ENCODE measurements at regions of chr12 and their contacts with region 1.

Region 1: GRCh38 chr12:22100958-22101748 is 55.1 kb downstream of the CMAS start:
- DNase-seq: peak; percentile 76
- H3K4me3 Mint-ChIP-seq: no peak overlapping the region
- H3K27ac Mint-ChIP-seq: no peak overlapping the region
- H3K4me1 Mint-ChIP-seq: peaks cover 14% of the 10 kb centered on the region
- H3K27me3 Mint-ChIP-seq: no peaks in the 10 kb centered on the region

Region 2: DNA sequence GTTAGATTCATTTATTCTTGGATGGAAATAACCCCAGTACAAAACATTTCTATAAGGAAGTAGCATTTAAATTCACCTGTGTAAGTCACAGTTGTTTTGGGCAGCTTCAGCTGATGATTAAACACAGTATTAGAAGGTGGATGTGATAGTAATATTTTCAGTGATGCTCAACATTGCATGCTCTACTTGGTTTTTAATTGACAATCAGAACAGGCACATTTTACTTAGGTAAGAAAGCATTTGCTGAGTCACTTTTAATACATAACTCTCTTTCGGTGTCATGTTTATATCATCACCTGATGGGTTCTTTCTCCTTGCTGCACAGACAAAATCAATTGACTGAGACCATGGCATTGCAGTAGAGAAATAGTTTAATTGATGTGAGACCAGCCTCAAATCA is 25.6 kb after region 1 on chr12:
- CTCF ChIA-PET with region 1: interaction called, 5 read pairs
- intact Hi-C with region 1: loop called (anchors 1 kb)
- DNase-seq: no peak
- H3K4me3 Mint-ChIP-seq: no peak overlapping the region
- H3K27ac Mint-ChIP-seq: no peak overlapping the region
- H3K4me1 Mint-ChIP-seq: peaks cover 11% of the 10 kb centered on the region
- H3K27me3 Mint-ChIP-seq: no peaks in the 10 kb centered on the region

Region 3: GRCh38 chr12:22164139-22164538 is 63.0 kb after region 1 on chr12:
- CTCF ChIA-PET with region 1: no interaction called
- intact Hi-C with region 1: no loop called
- DNase-seq: peak; percentile 21
- H3K4me3 Mint-ChIP-seq: peak overlapping the region; percentile 3
- H3K27ac Mint-ChIP-seq: peak overlapping the region; percentile 1
- H3K4me1 Mint-ChIP-seq: peaks cover 40% of the 10 kb centered on the region
- H3K27me3 Mint-ChIP-seq: no peaks in the 10 kb centered on the region

Region 4: DNA sequence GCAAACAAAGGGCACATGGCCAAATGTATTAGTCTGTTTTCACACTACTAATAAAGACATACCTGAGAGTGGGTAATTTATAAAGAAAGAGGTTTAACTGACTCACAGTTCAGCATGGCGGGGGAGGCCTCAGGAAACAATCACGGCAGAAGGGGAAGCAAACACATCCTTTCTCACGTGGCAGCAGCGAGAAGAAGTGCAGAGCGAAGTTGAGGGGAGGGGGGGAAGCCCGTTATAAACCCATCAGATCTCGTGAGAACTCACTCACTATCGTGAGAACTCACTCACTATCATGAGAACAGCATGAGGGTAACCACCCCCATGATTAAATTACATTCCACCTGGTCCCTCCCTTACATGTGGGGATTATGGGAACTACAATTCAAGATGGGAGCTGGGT is 167.3 kb after region 1 on chr12:
- CTCF ChIA-PET with region 1: no interaction called
- intact Hi-C with region 1: loop called (anchors 5 kb)
- DNase-seq: peak; percentile 36
- H3K4me3 Mint-ChIP-seq: no peak overlapping the region
- H3K27ac Mint-ChIP-seq: no peak overlapping the region
- H3K4me1 Mint-ChIP-seq: peaks cover 7% of the 10 kb centered on the region
- H3K27me3 Mint-ChIP-seq: no peaks in the 10 kb centered on the region

Region 5: DNA sequence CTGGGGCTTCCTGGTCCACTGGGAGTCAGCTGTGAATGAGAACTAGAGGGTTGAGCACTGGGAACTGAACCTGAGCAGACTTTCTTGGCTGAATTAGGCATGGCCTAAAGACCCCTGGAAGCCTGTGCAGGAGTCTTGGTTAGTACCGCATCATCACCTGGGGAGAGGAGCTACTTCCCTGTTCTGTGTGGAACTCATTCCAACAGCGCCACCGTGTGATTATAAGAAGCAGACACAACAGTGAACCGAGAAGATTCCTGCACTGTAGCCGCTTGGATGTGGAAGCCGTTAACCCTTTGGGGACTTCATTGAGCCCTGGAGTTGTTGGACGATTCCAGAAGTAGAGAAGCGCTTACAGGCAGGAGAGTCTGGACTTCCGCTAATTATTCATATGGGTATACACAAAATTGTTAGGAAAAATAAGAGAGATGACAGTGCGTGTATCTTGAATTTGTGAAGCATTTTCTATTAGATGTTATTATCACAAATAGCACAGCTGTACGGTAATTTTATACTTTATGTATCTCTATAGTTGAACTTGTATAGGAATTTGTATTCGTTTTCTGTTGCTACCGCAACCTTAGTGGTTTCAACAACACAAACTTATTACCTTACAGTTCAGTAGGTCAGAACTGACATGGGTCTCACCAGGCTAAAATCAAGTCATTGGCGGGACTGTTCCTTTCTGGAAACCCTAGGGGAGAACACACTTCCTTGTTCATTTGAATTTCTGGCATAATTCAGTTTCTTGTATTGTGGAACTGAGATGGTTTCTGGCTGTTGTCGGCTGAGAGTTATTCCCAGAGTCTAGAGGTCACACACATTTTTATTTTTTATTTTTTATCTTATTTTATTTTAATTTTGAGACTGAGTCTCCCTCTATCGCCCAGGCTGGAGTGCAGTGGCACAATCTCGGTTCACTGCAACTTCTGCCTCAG is 342.5 kb after region 1 on chr12:
- CTCF ChIA-PET with region 1: interaction called, 10 read pairs
- intact Hi-C with region 1: loop called (anchors 1 kb)
- DNase-seq: peak; percentile 75
- H3K4me3 Mint-ChIP-seq: no peak overlapping the region
- H3K27ac Mint-ChIP-seq: no peak overlapping the region
- H3K4me1 Mint-ChIP-seq: peaks cover 3% of the 10 kb centered on the region
- H3K27me3 Mint-ChIP-seq: no peaks in the 10 kb centered on the region

Region 6: GRCh38 chr12:22544038-22544979 is 443.2 kb after region 1 on chr12 and contains the start of gene C2CD5:
- CTCF ChIA-PET with region 1: no interaction called
- intact Hi-C with region 1: loop called (anchors 5 kb)
- DNase-seq: peak; percentile 96
- H3K4me3 Mint-ChIP-seq: peak within 1 kb of the TSS; percentile 91
- H3K27ac Mint-ChIP-seq: peak within 1 kb of the TSS; percentile 91
- H3K4me1 Mint-ChIP-seq: peaks cover 40% of the 10 kb centered on the region
- H3K27me3 Mint-ChIP-seq: no peaks in the 10 kb centered on the region
- total RNA-seq, gene C2CD5: 34.5 to 39.9 TPM

Measured in activated naive CD4-positive, alpha-beta T cell treated with anti-CD3 and anti-CD28 coated beads for 36 hours (primary cell).